Activated CD4-positive, alpha-beta memory T cell treated with anti-CD3 and anti-CD28 coated beads, Interleukin-2, amount 10 ng/mL, durations not matched to agents 7 days and 5 days (primary cell): ENCODE measurements at regions of chr9 and their contacts with region 1.

Region 1: DNA sequence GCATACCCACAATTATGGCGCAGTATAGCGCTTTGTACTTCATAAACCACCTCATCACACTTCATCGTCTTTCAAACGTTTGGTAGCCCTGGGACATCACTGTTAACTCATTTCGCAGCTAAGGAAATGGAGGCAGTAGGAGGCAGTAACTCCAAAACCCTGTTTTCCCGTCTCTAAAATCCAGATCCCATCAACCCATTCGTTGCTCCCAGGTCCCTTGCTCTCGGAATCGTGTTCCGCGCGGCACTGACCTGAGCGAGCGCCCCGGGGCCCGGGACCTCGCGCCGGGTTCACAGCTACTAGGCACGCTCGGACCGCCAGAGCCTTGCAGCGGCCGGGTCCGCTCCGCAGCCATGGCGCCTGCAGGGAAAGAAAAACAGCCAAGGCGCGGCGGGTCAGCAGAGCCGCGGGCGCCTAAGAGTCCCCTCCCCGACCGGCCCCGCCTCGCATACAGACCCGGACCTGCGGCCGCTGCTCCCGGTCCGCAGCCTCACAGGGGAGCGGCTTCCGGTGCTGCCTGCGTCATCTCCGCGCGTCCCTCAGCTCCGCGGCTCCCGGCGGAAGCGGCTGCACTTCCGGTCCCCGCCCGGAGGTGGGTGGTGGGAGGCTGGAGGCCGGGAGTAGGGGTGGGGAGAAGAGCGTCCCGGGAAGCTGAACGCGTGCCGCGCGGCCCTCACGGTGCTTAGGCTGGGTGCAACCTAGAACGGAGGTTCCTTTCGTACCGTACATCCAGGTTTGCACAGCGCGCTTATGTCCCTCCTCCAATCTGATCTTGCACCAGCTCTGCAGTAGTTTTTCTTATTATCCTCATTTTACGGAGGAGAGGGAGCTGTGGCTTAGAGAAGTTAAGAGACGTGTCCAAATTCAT is at the start of gene FBXW2:
- DNase-seq: peak; percentile 91
- H3K4me3 Mint-ChIP-seq: peak within 1 kb of the TSS; percentile 91
- H3K27ac Mint-ChIP-seq: peak within 1 kb of the TSS; percentile 90
- H3K4me1 Mint-ChIP-seq: peaks cover 50% of the 10 kb centered on the region
- H3K27me3 Mint-ChIP-seq: no peaks in the 10 kb centered on the region
- total RNA-seq, gene FBXW2: 90.0 to 90.7 TPM

Region 2: DNA sequence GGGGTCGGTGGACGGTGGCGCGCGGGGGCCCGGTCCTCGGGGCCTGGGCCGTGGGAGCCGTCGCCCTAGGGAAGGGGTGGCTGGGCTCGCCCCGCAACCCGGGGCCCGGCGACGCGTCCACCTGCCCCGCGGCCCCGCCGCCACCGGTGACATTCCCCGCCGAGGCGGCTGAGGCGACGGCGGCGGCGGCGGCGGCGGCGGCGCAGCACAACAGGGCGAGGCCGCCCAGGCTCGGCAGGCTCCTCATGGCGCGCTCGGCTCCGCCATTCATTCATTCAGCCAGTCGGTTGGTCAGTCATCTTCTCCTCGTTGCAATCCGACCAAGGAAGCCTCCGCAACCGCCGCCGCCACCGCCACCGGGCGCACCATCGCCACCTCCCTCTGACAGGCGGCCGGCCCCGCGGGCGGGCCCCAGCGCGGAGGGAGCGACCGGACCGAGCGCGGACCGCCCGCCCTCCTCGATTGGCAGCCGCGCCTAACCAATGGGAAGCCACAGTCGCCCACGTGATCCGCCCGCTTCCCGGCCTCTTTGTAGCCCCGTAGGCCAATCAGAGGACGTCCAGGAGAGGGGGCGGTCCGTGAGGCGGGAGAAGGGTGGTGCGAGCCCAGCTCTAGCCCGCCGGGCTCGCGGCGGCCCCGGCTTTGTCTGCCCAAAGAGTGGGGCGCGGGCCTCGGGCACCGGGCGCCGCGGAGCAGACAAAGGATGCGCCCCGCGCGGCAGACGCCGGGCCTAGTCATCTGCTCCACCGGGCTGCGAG is 78.9 kb before region 1 on chr9 and contains the start of gene MEGF9:
- CTCF ChIA-PET with region 1: no interaction called
- POLR2A ChIA-PET with region 1: interaction called, 10 read pairs
- DNase-seq: peak; percentile 97
- H3K4me3 Mint-ChIP-seq: peak within 1 kb of the TSS; percentile 83
- H3K27ac Mint-ChIP-seq: peak within 1 kb of the TSS; percentile 73
- H3K4me1 Mint-ChIP-seq: peaks cover 42% of the 10 kb centered on the region
- H3K27me3 Mint-ChIP-seq: no peaks in the 10 kb centered on the region
- total RNA-seq, gene MEGF9: 10.6 TPM

Region 3: GRCh38 chr9:120767456-120768167 is 25.5 kb before region 1 on chr9:
- CTCF ChIA-PET with region 1: interaction called, 3 read pairs
- POLR2A ChIA-PET with region 1: interaction called, 14 read pairs
- DNase-seq: no peak
- H3K4me3 Mint-ChIP-seq: no peak overlapping the region
- H3K27ac Mint-ChIP-seq: no peak overlapping the region
- H3K4me1 Mint-ChIP-seq: peaks cover 56% of the 10 kb centered on the region
- H3K27me3 Mint-ChIP-seq: no peaks in the 10 kb centered on the region

Region 4: DNA sequence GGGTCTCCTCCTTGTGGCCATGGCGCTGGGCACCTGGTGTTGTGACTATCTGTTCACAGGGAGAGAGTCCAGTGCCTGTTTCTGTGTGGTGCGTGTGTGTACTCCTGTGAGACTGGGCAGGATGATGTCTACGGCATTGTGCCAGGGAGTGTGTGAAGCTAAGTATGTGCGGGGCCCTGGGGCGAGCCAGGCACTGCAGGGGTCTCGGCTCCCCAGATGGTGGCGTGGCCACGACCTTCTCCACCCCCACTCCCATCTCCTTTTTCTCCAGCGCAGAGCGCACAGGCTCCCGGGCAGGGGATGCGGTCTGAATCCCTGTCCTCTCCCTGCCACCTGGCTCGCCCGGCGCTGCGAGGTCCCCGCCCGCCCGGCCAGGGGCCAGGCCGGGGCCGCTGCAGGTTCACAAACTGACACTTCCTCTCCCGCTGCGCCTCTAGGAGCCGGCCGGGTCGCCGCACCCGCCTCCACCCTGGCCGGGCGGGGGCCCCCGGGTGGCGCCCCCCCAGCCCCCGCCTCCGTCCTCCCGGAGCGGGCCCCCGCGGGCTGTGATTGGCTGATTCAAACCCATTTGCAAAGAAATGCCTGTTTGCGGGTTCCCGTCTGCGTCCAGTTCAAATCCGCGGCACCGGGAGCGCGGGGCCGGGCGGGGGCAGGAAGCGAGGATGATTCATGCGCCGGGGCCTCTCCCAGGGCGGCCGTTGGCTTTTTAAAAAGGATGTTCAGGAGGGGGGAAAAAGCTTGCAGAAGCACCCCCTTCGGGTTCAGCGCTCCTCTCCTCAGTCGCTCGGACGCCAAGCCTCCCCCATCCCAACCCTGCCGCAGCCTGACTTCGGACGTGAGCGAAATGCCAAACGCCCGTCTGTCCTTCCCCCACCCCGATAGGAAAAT is 83.1 kb after region 1 on chr9:
- CTCF ChIA-PET with region 1: interaction called, 3 read pairs
- POLR2A ChIA-PET with region 1: interaction called, 21 read pairs
- DNase-seq: peak; percentile 94
- H3K4me3 Mint-ChIP-seq: peak overlapping the region; percentile 94
- H3K27ac Mint-ChIP-seq: peak overlapping the region; percentile 98
- H3K4me1 Mint-ChIP-seq: peaks cover 76% of the 10 kb centered on the region
- H3K27me3 Mint-ChIP-seq: no peaks in the 10 kb centered on the region

Region 5: GRCh38 chr9:120928483-120929228 is 135.5 kb after region 1 on chr9:
- CTCF ChIA-PET with region 1: interaction called, 3 read pairs
- POLR2A ChIA-PET with region 1: interaction called, 27 read pairs
- DNase-seq: peak; percentile 86
- H3K4me3 Mint-ChIP-seq: peak overlapping the region; percentile 93
- H3K27ac Mint-ChIP-seq: peak overlapping the region; percentile 100
- H3K4me1 Mint-ChIP-seq: peaks cover 79% of the 10 kb centered on the region
- H3K27me3 Mint-ChIP-seq: no peaks in the 10 kb centered on the region